GM12878 (cell line): ENCODE measurements at regions of chr15 and their contacts with region 1.

Region 1: DNA sequence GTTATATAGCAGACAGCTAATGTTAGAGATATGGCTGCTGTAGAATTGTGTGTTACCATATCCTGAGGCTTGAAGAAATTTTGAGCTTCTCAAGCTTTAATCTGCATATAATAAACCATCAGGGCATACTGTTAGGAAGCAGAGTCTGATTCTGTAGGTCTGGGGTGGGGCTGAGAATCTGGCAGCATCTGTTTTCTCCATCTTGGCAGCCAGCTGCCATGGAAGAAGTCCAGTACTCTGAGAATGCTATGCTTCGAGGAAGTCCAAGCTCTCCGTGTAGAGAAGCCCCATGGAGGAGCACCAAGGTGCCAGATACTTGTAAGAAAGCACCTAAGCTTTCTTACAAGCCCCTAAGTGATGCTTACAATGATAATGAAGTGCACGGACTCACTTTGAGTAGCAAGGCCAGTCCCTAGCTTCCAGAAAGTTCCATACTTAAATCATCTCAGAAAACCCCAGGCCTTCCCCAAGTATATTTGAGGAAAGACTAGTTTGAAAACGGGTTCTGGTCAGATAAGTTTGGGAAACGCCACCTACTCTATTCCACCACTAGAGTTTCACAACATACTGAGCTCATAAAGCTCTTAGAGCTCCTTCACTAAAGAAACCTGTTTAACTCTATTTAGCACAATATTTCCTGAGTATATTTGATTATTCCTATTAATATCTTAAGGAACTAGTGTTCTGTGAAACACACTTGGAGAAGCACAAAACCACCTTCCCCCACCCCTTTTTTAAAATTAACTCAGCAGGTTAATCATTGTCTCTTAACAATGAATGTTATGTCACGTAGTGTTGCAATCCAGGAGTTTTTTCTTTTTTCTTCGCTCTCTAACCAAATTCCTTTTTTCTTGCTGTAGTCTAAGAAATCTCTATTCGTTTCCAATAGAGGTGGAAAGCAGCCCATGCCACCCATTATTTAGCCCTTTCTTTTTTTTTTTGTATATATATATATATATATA is 59.9 kb upstream of the RASGRP1 start:
- DNase-seq: no peak
- ATAC-seq: peak; percentile 33
- H3K4me3 ChIP-seq: no peak overlapping the region
- H3K27ac ChIP-seq: no peak overlapping the region
- H3K4me1 ChIP-seq: no peaks in the 10 kb centered on the region
- H3K27me3 ChIP-seq: no peaks in the 10 kb centered on the region
- CTCF ChIP-seq: 0 out of 6 replicates have a peak, but pooled peaks of 1 of the 3 experiments have one; percentile 3
- EP300 ChIP-seq: no peak
- POLR2A ChIP-seq: no peak
- RAD21 ChIP-seq: no peak

Region 2: GRCh38 chr15:38294126-38294525 is 330.4 kb before region 1 on chr15:
- CTCF ChIA-PET with region 1: no interaction called
- POLR2A ChIA-PET with region 1: no interaction called
- RAD21 ChIA-PET with region 1: no interaction called
- SMC1A ChIA-PET with region 1: no interaction called
- in situ Hi-C with region 1: no loop called
- intact Hi-C with region 1: no loop called
- DNase-seq: no peak
- ATAC-seq: no peak
- H3K4me3 ChIP-seq: no peak overlapping the region
- H3K27ac ChIP-seq: no peak overlapping the region
- H3K4me1 ChIP-seq: no peaks in the 10 kb centered on the region
- H3K27me3 ChIP-seq: no peaks in the 10 kb centered on the region
- CTCF ChIP-seq: no peak
- EP300 ChIP-seq: no peak
- POLR2A ChIP-seq: no peak
- RAD21 ChIP-seq: no peak

Region 3: GRCh38 chr15:38589502-38589901 is 35.0 kb before region 1 on chr15:
- CTCF ChIA-PET with region 1: interaction called, 3 read pairs
- POLR2A ChIA-PET with region 1: interaction called, 4 read pairs
- RAD21 ChIA-PET with region 1: interaction called, 13 read pairs
- SMC1A ChIA-PET with region 1: interaction called, 8 read pairs
- in situ Hi-C with region 1: no loop called
- intact Hi-C with region 1: no loop called
- DNase-seq: no peak
- ATAC-seq: no peak
- H3K4me3 ChIP-seq: no peak overlapping the region
- H3K27ac ChIP-seq: no peak overlapping the region
- H3K4me1 ChIP-seq: no peaks in the 10 kb centered on the region
- H3K27me3 ChIP-seq: no peaks in the 10 kb centered on the region
- CTCF ChIP-seq: no peak
- EP300 ChIP-seq: no peak
- POLR2A ChIP-seq: no peak
- RAD21 ChIP-seq: no peak

Region 4: DNA sequence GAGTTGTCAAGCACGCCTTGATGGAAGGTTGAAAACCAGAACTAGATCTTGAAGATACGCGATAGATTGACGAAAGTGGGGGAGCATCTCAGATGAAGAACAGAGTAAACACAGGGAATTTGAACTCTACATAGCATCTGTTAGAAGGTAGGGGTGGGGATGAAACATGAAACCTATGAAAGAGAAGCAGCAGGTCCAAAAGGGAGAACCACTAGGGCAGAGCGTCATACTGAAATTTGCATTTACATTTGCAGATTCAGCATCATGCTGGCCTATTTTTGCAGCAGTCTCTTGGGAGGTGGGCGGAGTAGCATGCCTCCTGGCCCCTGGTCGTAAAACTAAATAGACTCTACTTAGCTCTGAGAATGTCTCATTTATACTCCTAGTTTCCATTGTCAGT is 13.8 kb before region 1 on chr15:
- CTCF ChIA-PET with region 1: interaction called, 14 read pairs
- POLR2A ChIA-PET with region 1: interaction called, 55 read pairs
- RAD21 ChIA-PET with region 1: interaction called, 43 read pairs
- SMC1A ChIA-PET with region 1: interaction called, 238 read pairs
- in situ Hi-C with region 1: no loop called
- intact Hi-C with region 1: no loop called
- DNase-seq: no peak
- ATAC-seq: peak; percentile 29
- H3K4me3 ChIP-seq: no peak overlapping the region
- H3K27ac ChIP-seq: no peak overlapping the region
- H3K4me1 ChIP-seq: no peaks in the 10 kb centered on the region
- H3K27me3 ChIP-seq: no peaks in the 10 kb centered on the region
- CTCF ChIP-seq: no peak
- EP300 ChIP-seq: no peak
- POLR2A ChIP-seq: no peak
- RAD21 ChIP-seq: no peak

Region 5: GRCh38 chr15:38647683-38648082 is 23.2 kb after region 1 on chr15:
- CTCF ChIA-PET with region 1: interaction called, 188 read pairs
- POLR2A ChIA-PET with region 1: interaction called, 310 read pairs
- RAD21 ChIA-PET with region 1: interaction called, 737 read pairs
- SMC1A ChIA-PET with region 1: interaction called, 1,803 read pairs
- in situ Hi-C with region 1: no loop called
- intact Hi-C with region 1: no loop called
- DNase-seq: no peak
- ATAC-seq: no peak
- H3K4me3 ChIP-seq: no peak overlapping the region
- H3K27ac ChIP-seq: no peak overlapping the region
- H3K4me1 ChIP-seq: peaks cover 27% of the 10 kb centered on the region
- H3K27me3 ChIP-seq: no peaks in the 10 kb centered on the region
- CTCF ChIP-seq: peak in 2 of 3 experiments; percentile 5 to 17; a peak in 1 of 6 replicates
- EP300 ChIP-seq: no peak
- POLR2A ChIP-seq: no peak
- RAD21 ChIP-seq: peak; percentile 23; the same call in 1 of the 2 replicates

Region 6: GRCh38 chr15:38665586-38666305 is 41.2 kb after region 1 on chr15:
- CTCF ChIA-PET with region 1: interaction called, 51 read pairs
- POLR2A ChIA-PET with region 1: interaction called, 109 read pairs
- RAD21 ChIA-PET with region 1: interaction called, 737 read pairs
- SMC1A ChIA-PET with region 1: interaction called, 1,803 read pairs
- in situ Hi-C with region 1: no loop called
- intact Hi-C with region 1: no loop called
- DNase-seq: no peak
- ATAC-seq: no peak
- H3K4me3 ChIP-seq: no peak overlapping the region
- H3K27ac ChIP-seq: no peak overlapping the region
- H3K4me1 ChIP-seq: peaks cover 17% of the 10 kb centered on the region
- H3K27me3 ChIP-seq: no peaks in the 10 kb centered on the region
- CTCF ChIP-seq: no peak
- EP300 ChIP-seq: no peak
- POLR2A ChIP-seq: no peak
- RAD21 ChIP-seq: no peak

Region 7: DNA sequence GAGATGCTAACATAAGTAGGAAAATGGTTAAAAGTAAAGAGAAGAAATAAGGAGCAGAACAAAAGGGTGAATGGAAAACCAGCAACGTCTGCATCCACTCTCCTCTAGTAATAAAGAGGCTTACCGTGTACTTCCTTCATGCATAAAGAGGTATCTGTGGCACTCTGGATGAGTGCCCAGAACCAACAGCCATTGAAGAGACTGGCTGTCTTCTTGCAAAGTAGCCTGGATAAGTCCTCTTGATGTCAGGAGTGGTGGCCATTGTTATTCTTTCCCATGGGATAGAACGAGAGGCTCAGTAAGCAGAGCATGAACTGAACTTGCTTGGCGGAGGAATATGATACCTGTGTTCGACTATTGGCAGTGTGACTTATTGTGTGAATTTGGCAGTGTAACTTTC is 126.3 kb after region 1 on chr15:
- CTCF ChIA-PET with region 1: no interaction called
- POLR2A ChIA-PET with region 1: no interaction called
- RAD21 ChIA-PET with region 1: no interaction called
- SMC1A ChIA-PET with region 1: no interaction called
- in situ Hi-C with region 1: no loop called
- intact Hi-C with region 1: no loop called
- DNase-seq: no peak
- ATAC-seq: no peak
- H3K4me3 ChIP-seq: no peak overlapping the region
- H3K27ac ChIP-seq: no peak overlapping the region
- H3K4me1 ChIP-seq: no peaks in the 10 kb centered on the region
- H3K27me3 ChIP-seq: no peaks in the 10 kb centered on the region; a peak in 2 of 4 replicates
- CTCF ChIP-seq: no peak
- EP300 ChIP-seq: no peak
- POLR2A ChIP-seq: no peak
- RAD21 ChIP-seq: no peak

Region 8: DNA sequence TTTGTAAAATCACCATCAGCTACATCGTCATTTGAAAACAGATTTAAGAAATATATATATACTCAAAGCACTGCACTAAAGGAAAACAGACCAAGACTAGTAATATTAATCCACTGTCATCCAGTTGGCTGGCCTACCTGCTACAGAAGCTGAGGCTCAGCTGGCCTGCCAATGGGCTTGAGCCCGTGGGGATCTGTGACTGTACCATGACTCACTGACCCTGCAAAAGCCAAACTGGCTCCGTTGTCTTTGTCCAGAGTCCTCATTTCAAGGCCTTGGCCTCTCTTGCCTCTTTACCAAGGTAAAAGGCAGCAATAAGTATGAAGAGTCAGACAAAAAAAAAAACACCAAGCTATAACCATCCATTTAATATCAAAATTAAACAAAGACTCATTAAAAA is 403.5 kb after region 1 on chr15:
- CTCF ChIA-PET with region 1: no interaction called
- POLR2A ChIA-PET with region 1: no interaction called
- RAD21 ChIA-PET with region 1: no interaction called
- SMC1A ChIA-PET with region 1: no interaction called
- in situ Hi-C with region 1: no loop called
- intact Hi-C with region 1: no loop called
- DNase-seq: no peak
- ATAC-seq: no peak
- H3K4me3 ChIP-seq: no peak overlapping the region
- H3K27ac ChIP-seq: no peak overlapping the region
- H3K4me1 ChIP-seq: no peaks in the 10 kb centered on the region
- H3K27me3 ChIP-seq: no peaks in the 10 kb centered on the region
- CTCF ChIP-seq: no peak
- EP300 ChIP-seq: no peak
- POLR2A ChIP-seq: no peak
- RAD21 ChIP-seq: no peak